Heart right ventricle (tissue), 16 donors: ENCODE measurements at regions of chr2 and their contacts with region 1.

Region 1: GRCh38 chr2:221124532-221125240 is 447.4 kb downstream of the EPHA4 start:
- DNase-seq: peak; percentile 12 to 73
- ATAC-seq: peak; percentile 37 to 93 (median 78)
- H3K4me3 ChIP-seq: peak overlapping the region in 4 of 10 donors; percentile 10 to 25 (median 18)
- H3K27ac ChIP-seq: peak overlapping the region in 1 of 10 donors; percentile 24
- H3K4me1 ChIP-seq: peaks cover 0 to 12% (median 0%) of the 10 kb centered on the region in 9 donors
- H3K27me3 ChIP-seq: peaks cover 0 to 17% (median 0%) of the 10 kb centered on the region in 7 donors
- CTCF ChIP-seq: no peak

Region 2: GRCh38 chr2:221235941-221236340 is 111.3 kb after region 1 on chr2:
- intact Hi-C with region 1: loop called in 1 of 10 experiments (anchors 10 kb)
- DNase-seq: peak in 1 of 2 donors; percentile 19
- ATAC-seq: peak in 7 of 8 donors; percentile 44 to 97 (median 80)
- H3K4me3 ChIP-seq: no peak overlapping the region
- H3K27ac ChIP-seq: peak overlapping the region in 9 of 10 donors; percentile 3 to 71 (median 37)
- H3K4me1 ChIP-seq: peaks cover 0 to 42% (median 6%) of the 10 kb centered on the region in 9 donors
- H3K27me3 ChIP-seq: no peaks in the 10 kb centered on the region
- CTCF ChIP-seq: no peak

Region 3: GRCh38 chr2:221562226-221562625 is 437.5 kb after region 1 on chr2:
- intact Hi-C with region 1: loop called in 1 of 10 experiments (anchors 5 kb)
- DNase-seq: no peak
- ATAC-seq: no peak
- H3K4me3 ChIP-seq: no peak overlapping the region
- H3K27ac ChIP-seq: no peak overlapping the region
- H3K4me1 ChIP-seq: peaks cover 0 to 79% (median 3%) of the 10 kb centered on the region in 9 donors
- H3K27me3 ChIP-seq: peaks cover 0 to 2% (median 0%) of the 10 kb centered on the region in 7 donors
- CTCF ChIP-seq: no peak